Activated CD8-positive, alpha-beta memory T cell treated with anti-CD3 and anti-CD28 coated beads, Interleukin-2, amount 10 ng/mL, durations not matched to agents 7 days and 5 days (primary cell): ENCODE measurements at regions of chr2 and their contacts with region 1.

Region 1: DNA sequence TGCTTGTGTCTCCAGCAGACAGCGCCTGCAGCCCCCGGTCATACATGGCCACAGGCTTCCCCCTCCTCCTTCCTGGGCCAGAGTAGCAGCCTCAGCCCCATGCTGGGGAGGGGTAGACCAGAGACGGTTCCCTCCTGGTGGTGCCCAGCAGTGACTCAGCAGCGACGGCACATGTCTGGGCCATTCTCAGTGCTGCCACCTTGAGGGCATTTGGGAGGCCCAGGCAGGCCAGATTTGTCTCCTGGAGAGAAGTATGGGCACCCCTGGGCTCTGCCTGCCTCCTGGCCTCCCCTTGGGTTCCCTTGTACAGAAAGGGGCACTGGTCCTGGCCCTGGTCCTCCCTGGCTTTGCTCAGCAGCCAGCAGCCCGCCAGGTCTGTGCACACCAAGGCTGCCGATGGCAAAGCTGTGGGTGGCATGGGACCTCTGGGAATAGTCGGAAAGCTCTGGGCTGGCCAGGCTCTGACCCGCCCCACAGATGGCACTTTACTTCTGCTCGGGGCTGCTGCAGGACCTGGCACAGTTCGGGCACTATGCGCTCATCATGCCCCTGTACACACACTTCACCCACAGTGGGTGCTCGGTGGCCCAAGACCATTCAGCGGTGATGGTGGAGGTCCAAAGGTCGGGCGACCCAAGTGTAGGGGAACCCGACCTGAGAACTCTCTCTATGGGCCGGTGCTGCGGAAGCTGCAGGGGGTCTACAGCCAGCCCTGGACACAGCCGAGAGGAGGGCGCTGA is 11.4 kb upstream of the ALPI start:
- DNase-seq: peak; percentile 79
- ATAC-seq: peak; percentile 63
- H3K4me3 Mint-ChIP-seq: no peak overlapping the region
- H3K27ac Mint-ChIP-seq: no peak overlapping the region
- H3K4me1 Mint-ChIP-seq: peaks cover 15% of the 10 kb centered on the region
- H3K27me3 Mint-ChIP-seq: no peaks in the 10 kb centered on the region

Region 2: DNA sequence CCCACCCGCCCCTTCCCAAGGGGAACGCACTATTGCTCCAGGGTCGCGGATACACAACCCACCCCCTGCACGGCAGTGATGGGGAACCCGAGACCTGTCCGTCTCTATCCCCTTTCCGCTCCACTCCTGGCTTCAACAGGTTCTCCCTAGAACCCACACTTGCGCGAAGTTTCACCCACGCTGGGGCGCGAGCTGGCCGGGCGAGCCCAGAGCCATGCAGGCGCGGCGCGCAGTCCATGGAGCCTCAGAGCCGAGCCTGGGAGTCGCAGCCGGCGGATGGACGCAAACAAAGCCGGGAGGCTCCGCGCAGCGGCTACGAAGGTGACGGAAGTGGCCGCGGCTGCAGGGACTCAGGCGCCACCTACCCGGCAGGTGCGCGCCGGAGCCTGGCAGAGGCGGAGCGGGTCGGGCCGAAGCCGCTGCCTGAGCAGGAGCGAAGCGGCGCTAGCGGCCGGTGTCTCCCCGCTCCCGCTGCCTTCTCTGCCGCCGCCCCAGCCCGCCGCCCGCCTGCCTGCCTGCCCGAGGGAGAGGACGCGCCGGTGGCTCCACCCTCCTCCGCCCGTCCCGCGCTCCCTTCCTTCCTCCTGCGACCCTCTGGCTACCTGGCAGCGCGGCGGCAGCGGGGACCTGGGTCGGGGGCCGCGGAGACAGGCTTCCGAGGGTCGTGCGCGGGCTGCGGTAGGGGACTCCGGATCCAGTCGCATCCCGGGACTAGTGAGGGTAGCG is 24.0 kb before region 1 on chr2:
- CTCF ChIA-PET with region 1: no interaction called
- DNase-seq: no peak
- ATAC-seq: peak; percentile 59
- H3K4me3 Mint-ChIP-seq: no peak overlapping the region
- H3K27ac Mint-ChIP-seq: no peak overlapping the region
- H3K4me1 Mint-ChIP-seq: peaks cover 9% of the 10 kb centered on the region
- H3K27me3 Mint-ChIP-seq: peaks cover 70% of the 10 kb centered on the region

Region 3: GRCh38 chr2:232521959-232522622 is 77.5 kb after region 1 on chr2:
- CTCF ChIA-PET with region 1: interaction called, 34 read pairs
- DNase-seq: peak; percentile 62
- ATAC-seq: peak; percentile 82
- H3K4me3 Mint-ChIP-seq: no peak overlapping the region
- H3K27ac Mint-ChIP-seq: no peak overlapping the region
- H3K4me1 Mint-ChIP-seq: peaks cover 2% of the 10 kb centered on the region
- H3K27me3 Mint-ChIP-seq: peaks cover 22% of the 10 kb centered on the region